CD14-positive monocyte (primary cell): ENCODE measurements at regions of chr2 and their contacts with region 1.

Region 1: GRCh38 chr2:222318026-222318711 is 19.4 kb upstream of the PAX3 start:
- DNase-seq: peak in 2 of 3 donors; percentile 50 to 57
- H3K4me3 ChIP-seq: peak overlapping the region; percentile 46 to 83 (median 53)
- H3K4me3 Mint-ChIP-seq: peak overlapping the region; percentile 86 to 99
- H3K27ac ChIP-seq: no peak overlapping the region
- H3K27ac Mint-ChIP-seq: peak overlapping the region in 2 of 7 donors; percentile 7 to 46
- H3K4me1 ChIP-seq: peaks cover 14 to 27% of the 10 kb centered on the region in 2 donors
- H3K4me1 Mint-ChIP-seq: peaks cover 16% of the 10 kb centered on the region
- H3K27me3 ChIP-seq: peaks cover 70 to 88% of the 10 kb centered on the region in 2 donors
- H3K27me3 Mint-ChIP-seq: peaks cover 58 to 87% (median 70%) of the 10 kb centered on the region in 3 donors
- CTCF ChIP-seq: peak; percentile 71

Region 2: DNA sequence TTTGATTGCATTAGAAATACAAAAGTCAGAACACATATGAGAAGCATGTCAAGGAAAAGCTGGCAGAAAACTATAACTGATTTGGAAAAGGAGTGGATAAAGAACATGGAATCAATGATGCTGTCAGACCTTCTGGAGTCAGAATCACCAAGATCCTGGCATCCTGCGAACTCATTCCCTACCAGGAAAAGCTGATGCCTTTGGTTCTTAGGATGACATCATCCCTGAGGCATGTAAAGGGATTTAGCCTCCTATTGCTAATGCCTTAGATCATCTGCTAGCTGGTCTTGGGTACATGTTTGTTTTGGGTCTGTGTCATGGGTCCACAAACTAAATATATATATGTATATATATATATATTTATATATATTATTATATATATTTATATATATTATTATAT is 1426.8 kb before region 1 on chr2:
- intact Hi-C with region 1: no loop called
- DNase-seq: no peak
- H3K4me3 ChIP-seq: no peak overlapping the region
- H3K4me3 Mint-ChIP-seq: no peak overlapping the region
- H3K27ac ChIP-seq: no peak overlapping the region
- H3K27ac Mint-ChIP-seq: no peak overlapping the region
- H3K4me1 ChIP-seq: no peaks in the 10 kb centered on the region
- H3K4me1 Mint-ChIP-seq: no peaks in the 10 kb centered on the region
- H3K27me3 ChIP-seq: no peaks in the 10 kb centered on the region
- H3K27me3 Mint-ChIP-seq: no peaks in the 10 kb centered on the region
- CTCF ChIP-seq: no peak

Region 3: GRCh38 chr2:221896505-221897151 is 421.5 kb before region 1 on chr2:
- intact Hi-C with region 1: no loop called
- DNase-seq: no peak
- H3K4me3 ChIP-seq: no peak overlapping the region
- H3K4me3 Mint-ChIP-seq: no peak overlapping the region
- H3K27ac ChIP-seq: no peak overlapping the region
- H3K27ac Mint-ChIP-seq: no peak overlapping the region
- H3K4me1 ChIP-seq: no peaks in the 10 kb centered on the region
- H3K4me1 Mint-ChIP-seq: no peaks in the 10 kb centered on the region
- H3K27me3 ChIP-seq: no peaks in the 10 kb centered on the region
- H3K27me3 Mint-ChIP-seq: no peaks in the 10 kb centered on the region
- CTCF ChIP-seq: no peak

Region 4: DNA sequence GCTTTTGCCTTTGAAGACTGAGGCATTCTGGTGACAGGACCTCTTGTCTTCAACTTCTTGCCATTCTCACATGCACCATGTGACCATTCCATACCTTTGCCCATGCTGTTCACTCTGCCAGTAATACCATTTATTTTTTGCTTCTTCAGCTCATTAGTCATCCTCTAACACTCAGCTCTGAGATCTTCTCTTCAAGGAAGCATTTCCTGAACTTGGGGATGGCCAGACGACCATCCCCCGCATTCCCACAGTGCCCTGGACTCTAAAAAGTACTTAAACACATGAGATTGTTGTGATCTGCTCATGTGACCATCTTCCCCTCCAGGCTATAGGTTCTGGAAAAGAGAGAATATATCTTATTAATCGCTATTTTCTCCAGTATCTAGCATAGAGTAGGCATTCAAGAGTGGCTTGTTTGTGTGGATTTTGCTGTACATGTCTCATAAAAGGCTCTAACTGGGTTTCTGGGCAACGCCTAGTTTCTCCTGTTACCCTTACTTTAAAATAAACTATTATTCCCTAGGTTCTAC is 53.3 kb before region 1 on chr2:
- intact Hi-C with region 1: no loop called
- DNase-seq: no peak
- H3K4me3 ChIP-seq: no peak overlapping the region
- H3K4me3 Mint-ChIP-seq: no peak overlapping the region
- H3K27ac ChIP-seq: no peak overlapping the region
- H3K27ac Mint-ChIP-seq: no peak overlapping the region
- H3K4me1 ChIP-seq: no peaks in the 10 kb centered on the region
- H3K4me1 Mint-ChIP-seq: no peaks in the 10 kb centered on the region
- H3K27me3 ChIP-seq: peaks cover 15 to 26% of the 10 kb centered on the region in 2 donors
- H3K27me3 Mint-ChIP-seq: peaks cover 10 to 20% (median 15%) of the 10 kb centered on the region in 3 donors
- CTCF ChIP-seq: no peak

Region 5: GRCh38 chr2:222483513-222484039 is 165.4 kb after region 1 on chr2:
- intact Hi-C with region 1: loop called in 1 of 2 experiments (anchors 10 kb)
- DNase-seq: peak in 2 of 3 donors; percentile 18 to 43
- H3K4me3 ChIP-seq: no peak overlapping the region
- H3K4me3 Mint-ChIP-seq: no peak overlapping the region
- H3K27ac ChIP-seq: no peak overlapping the region
- H3K27ac Mint-ChIP-seq: no peak overlapping the region
- H3K4me1 ChIP-seq: no peaks in the 10 kb centered on the region
- H3K4me1 Mint-ChIP-seq: no peaks in the 10 kb centered on the region
- H3K27me3 ChIP-seq: peaks cover 18 to 21% of the 10 kb centered on the region in 2 donors
- H3K27me3 Mint-ChIP-seq: peaks cover 19 to 29% (median 28%) of the 10 kb centered on the region in 3 donors
- CTCF ChIP-seq: peak; percentile 28

Region 6: DNA sequence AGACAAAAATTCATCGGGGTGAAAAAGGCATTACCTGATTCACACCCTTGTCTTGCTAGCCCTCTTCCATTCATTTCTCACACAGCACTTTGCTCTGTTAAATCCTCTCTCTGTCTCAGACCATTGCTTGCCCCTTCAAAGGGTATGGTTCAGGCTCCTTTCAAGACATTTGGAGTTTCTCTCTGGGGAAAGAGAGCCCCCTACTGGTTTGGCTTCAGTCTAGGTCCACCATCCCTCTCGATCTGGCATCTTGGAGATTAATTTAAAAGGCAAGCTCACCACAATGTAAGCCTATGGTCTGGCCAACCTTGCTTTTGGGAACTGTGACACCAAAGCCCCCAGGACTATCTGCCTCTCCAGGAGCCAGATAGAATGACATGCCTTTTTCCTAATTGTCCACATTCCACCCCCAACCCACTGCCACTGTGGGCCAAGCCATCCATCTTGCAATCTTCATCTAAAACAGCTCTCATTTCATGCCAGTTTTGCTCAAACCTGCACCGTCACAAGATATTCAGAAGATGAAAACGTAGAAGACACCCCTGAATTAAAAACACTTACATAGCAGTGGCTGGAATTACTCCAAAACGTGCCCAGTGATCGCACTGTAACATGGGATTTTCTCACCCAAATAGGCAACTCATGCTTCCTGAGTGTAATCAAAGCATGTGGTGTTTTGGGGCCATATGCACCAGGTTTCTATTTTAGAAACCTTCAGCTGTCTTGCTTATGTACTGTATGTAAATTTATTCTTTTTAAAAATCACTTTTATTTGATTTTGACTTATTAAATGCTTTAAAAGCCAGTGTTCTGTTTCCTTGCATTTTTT is 243.9 kb after region 1 on chr2:
- intact Hi-C with region 1: loop called (anchors 5 kb)
- DNase-seq: peak; percentile 23 to 43 (median 35)
- H3K4me3 ChIP-seq: no peak overlapping the region
- H3K4me3 Mint-ChIP-seq: no peak overlapping the region
- H3K27ac ChIP-seq: no peak overlapping the region
- H3K27ac Mint-ChIP-seq: peak overlapping the region in 1 of 7 donors; percentile 14
- H3K4me1 ChIP-seq: no peaks in the 10 kb centered on the region
- H3K4me1 Mint-ChIP-seq: peaks cover 2% of the 10 kb centered on the region
- H3K27me3 ChIP-seq: no peaks in the 10 kb centered on the region
- H3K27me3 Mint-ChIP-seq: peaks cover 2 to 8% (median 5%) of the 10 kb centered on the region in 3 donors
- CTCF ChIP-seq: peak; percentile 64